ENCODE measurements at regions of chr14 and their contacts with region 1.

Region 1: GRCh38 chr14:61694830-61695694 is at the start of gene HIF1A:
- DNase-seq: peak; percentile 95

Region 2: DNA sequence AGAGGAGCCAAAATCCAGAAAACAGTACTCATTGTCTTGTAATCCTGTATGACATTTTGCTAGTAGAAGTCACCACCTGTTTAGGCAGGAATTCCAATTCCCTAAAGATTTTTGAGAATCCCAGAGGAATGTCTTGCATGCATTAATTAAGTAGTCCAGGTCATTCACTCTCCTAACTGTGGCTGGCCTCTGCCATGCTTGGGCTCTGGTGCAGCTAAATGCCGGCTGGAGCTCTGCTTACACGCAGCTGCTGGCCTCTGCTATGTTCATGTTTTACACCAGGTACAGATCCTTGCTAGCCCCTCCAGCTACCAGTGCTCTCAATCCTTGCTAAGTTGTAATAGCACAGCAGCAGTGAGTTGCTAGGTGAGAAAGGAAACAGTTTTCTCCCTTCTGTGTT is 16.1 kb before region 1 on chr14:
- CTCF ChIA-PET with region 1: interaction called, 4 read pairs
- POLR2A ChIA-PET with region 1: interaction called, 16 read pairs
- DNase-seq: no peak

Region 3: DNA sequence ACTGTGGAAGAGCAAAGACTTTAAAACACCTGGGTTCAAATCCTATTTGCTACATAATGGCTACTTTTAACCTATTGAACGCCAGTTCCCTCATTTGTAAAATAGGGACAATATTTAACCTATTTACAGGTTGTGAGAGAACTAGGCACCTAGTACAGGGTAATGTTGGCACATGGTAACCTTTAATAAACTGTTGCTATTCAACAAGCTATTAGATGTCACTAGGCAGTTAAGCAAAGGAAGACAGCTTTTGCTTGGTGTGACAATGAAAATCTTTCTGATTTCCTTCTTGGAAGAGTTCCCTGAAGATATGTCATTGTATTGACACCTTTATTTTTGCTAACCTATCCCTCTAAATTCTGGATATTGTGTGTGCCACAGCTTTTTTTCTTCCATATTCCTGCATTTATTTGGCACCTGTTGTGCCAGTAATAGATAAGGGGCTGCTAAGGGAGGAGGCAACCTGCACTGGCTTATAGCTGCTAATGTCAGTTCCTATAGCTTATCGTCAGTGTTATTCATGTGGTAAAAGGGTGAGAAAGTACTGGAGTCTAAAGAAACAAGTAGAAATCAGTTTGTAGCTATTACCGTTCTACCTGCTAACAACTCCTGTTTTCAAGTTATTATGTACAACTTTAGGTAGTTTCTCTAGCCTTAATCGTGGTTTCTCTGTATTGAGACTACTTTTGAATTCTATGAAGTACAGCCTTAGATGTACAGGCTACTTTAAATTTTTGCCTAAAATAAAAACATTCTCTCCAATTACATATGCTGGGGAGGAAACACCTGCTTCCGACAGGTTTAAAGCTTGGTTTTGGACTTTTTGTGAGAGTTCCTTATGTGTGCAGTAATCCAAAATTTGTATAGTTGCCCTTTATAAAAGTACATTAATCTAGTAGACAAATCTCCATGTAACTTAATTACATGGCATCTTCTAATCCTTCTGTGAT is 24.6 kb after region 1 on chr14:
- CTCF ChIA-PET with region 1: interaction called, 4 read pairs
- POLR2A ChIA-PET with region 1: interaction called, 19 read pairs
- DNase-seq: no peak

Region 4: DNA sequence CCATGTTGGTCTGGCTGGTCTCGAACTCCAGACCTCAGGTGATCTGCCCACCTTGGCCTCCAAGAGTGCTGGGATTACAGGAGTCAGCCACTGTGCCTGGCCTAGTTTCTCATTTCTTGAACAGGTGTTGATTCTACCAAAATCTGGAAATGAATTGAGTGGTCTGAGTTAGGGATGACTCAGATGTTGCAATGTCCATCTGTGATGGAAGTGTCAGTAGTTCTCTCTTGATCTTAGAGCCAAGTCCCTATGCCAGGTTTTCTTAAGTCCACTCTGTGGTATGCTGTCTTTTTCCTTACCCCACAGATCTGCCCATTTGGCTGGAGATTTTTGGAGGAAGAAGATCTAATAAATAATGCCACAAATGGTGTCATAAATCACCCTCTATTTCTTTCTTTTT is 79.8 kb after region 1 on chr14:
- CTCF ChIA-PET with region 1: no interaction called
- POLR2A ChIA-PET with region 1: no interaction called
- DNase-seq: no peak